ENCODE measurements at regions of chr1 and their contacts with region 1.

Region 1: DNA sequence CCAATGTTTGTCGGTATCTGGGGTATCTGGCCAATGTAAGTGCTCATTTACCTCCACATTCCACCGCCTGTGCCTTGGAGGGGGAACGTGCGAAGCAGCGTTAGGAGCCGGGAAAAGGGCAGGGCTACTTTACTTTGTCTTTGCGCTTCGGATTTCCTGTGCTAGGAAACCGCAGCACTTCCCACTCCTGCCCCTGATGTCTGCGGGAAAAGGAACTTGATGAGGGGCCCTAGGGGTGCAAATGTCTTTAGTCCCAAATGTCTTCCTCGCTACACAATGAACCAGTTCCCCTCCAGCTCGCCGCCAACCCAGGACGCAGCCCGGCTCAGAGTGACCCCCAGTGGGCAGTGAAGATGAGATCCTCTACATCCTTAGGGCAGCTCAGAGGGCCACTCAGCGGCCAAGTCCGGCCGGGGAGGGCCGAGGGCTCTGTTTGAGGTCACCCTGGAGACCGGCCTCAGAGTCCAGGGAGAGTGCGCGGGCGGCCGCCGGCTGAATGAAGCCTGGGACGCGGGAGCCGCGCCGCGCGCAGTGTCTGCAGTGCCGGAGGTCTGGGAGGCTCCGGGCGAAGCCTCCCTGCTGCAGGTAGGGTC is at the start of gene DYNLT5:
- DNase-seq: peak; percentile 72
- H3K4me3 ChIP-seq: peak within 1 kb of the TSS in 2 of 3 experiments; percentile 27 to 41
- H3K27ac ChIP-seq: peak within 1 kb of the TSS; percentile 25
- H3K4me1 ChIP-seq: peaks cover 26% of the 10 kb centered on the region
- H3K27me3 ChIP-seq: no peaks in the 10 kb centered on the region
- CTCF ChIP-seq: peak; percentile 33 to 46
- POLR2A ChIP-seq: no peak
- total RNA-seq, gene DYNLT5: 4.5 and 12.5 TPM in 2 replicates

Region 2: DNA sequence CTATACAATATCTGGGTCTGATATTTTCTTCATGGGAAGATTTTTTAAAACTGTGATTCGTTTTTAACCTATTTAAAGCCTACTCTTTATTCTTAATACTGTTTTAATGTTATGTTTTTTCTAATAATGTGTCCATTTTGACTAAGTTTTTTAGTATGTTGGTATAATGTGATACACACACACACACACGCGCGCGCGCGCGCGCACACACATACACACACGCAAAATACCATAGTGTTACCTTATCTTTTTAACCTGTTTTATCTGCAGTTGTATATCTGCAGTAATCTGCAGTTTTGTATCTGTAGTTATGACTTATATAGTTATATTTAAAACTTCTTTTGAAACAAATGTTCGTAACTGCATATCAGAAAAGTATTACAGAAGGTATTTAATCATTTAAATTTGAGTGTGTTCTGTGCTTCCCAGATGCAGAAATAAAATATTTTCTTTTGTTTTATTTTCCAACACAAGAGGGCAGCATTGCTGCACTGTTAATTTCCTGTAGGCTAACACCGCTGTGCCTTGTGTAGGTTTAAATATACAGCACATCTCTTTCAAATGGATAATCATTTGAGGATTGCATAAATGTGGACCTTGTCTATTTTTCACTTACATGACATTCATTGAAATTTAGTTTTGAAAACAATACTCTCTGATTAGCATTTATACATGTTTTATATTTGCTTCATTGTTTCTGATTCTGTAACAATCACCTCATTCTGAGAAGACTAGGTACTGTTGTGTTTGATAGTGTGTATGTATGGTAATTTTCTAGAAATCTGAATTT is 793.3 kb before region 1 on chr1:
- CTCF ChIA-PET with region 1: no interaction called
- POLR2A ChIA-PET with region 1: no interaction called
- dilution Hi-C with region 1: no loop called
- intact Hi-C with region 1: loop called (anchors 10 kb)
- DNase-seq: peak; percentile 73
- H3K4me3 ChIP-seq: no peak overlapping the region
- H3K27ac ChIP-seq: no peak overlapping the region
- H3K4me1 ChIP-seq: peaks cover 10% of the 10 kb centered on the region
- H3K27me3 ChIP-seq: no peaks in the 10 kb centered on the region
- CTCF ChIP-seq: peak; percentile 21 to 29
- POLR2A ChIP-seq: no peak

Region 3: GRCh38 chr1:66732407-66733166 is 19.5 kb before region 1 on chr1:
- CTCF ChIA-PET with region 1: interaction called, 14 read pairs
- POLR2A ChIA-PET with region 1: no interaction called
- dilution Hi-C with region 1: no loop called
- intact Hi-C with region 1: loop called (anchors 1 kb)
- DNase-seq: peak; percentile 64
- H3K4me3 ChIP-seq: no peak overlapping the region
- H3K27ac ChIP-seq: peak overlapping the region; percentile 64
- H3K4me1 ChIP-seq: peaks cover 37% of the 10 kb centered on the region
- H3K27me3 ChIP-seq: no peaks in the 10 kb centered on the region
- CTCF ChIP-seq: no peak
- POLR2A ChIP-seq: no peak

Region 4: DNA sequence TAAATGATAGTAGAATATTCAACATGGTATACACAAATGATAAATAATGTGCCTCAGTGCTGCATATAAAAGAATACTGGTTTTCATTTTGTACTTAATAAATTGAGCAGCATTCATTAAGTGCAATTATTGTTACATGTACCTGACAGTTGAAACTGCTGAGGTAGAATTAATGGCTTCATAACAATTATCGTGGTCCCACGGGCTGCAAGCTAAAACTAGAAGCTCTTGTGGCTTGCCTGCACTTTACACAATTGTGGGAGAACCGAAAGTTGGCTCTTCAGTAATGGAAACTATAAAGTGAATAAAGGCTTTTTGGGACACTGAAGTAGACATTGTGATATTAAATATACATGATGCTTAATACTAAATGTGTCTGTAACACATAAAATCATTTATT is 25.7 kb after region 1 on chr1:
- CTCF ChIA-PET with region 1: no interaction called
- POLR2A ChIA-PET with region 1: no interaction called
- dilution Hi-C with region 1: no loop called
- intact Hi-C with region 1: no loop called
- DNase-seq: no peak
- H3K4me3 ChIP-seq: no peak overlapping the region
- H3K27ac ChIP-seq: no peak overlapping the region
- H3K4me1 ChIP-seq: no peaks in the 10 kb centered on the region
- H3K27me3 ChIP-seq: no peaks in the 10 kb centered on the region
- CTCF ChIP-seq: no peak
- POLR2A ChIP-seq: no peak

Region 5: GRCh38 chr1:66924756-66925557 is 172.9 kb after region 1 on chr1 and contains the starts of genes DNAI4 and MIER1:
- CTCF ChIA-PET with region 1: no interaction called
- POLR2A ChIA-PET with region 1: no interaction called
- dilution Hi-C with region 1: no loop called
- intact Hi-C with region 1: loop called (anchors 2 kb)
- DNase-seq: peak; percentile 99
- H3K4me3 ChIP-seq: peak within 1 kb of the TSS; percentile 70 to 90 (median 82)
- H3K27ac ChIP-seq: peak within 1 kb of the TSS; percentile 95
- H3K4me1 ChIP-seq: peaks cover 30% of the 10 kb centered on the region
- H3K27me3 ChIP-seq: no peaks in the 10 kb centered on the region
- CTCF ChIP-seq: peak in 1 of 2 donors; percentile 15
- POLR2A ChIP-seq: peak; percentile 95
- total RNA-seq, gene DNAI4: 3.3 and 4.8 TPM in 2 replicates
- total RNA-seq, gene MIER1: 36.8 and 38.5 TPM in 2 replicates

Region 6: GRCh38 chr1:68120136-68120791 is 1368.2 kb after region 1 on chr1:
- CTCF ChIA-PET with region 1: no interaction called
- POLR2A ChIA-PET with region 1: no interaction called
- dilution Hi-C with region 1: no loop called
- intact Hi-C with region 1: no loop called
- DNase-seq: peak; percentile 85
- H3K4me3 ChIP-seq: no peak overlapping the region
- H3K27ac ChIP-seq: no peak overlapping the region
- H3K4me1 ChIP-seq: peaks cover 5% of the 10 kb centered on the region
- H3K27me3 ChIP-seq: no peaks in the 10 kb centered on the region
- CTCF ChIP-seq: peak; percentile 59 to 71
- POLR2A ChIP-seq: peak; percentile 26